Mammary epithelial cell (primary cell): ENCODE measurements at regions of chr2 and their contacts with region 1.

Region 1: DNA sequence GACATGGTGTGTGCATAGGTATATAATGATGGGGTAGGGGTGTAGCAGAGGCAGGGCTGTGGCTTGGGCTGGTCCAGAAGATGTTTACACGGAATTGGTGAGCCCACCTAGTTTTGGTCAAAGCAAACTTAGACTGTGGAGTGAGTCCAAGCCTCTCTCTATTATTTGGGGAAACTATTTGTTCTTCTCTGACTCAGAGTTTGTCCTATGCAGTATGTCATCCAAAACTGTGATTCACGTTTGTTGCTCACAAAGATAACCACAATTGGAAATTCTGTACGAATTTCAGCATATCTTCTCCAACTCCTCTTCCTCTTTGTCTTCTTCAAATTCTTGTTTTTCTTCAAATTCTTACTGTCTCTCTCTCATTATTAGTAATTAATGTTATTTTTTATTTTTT is 292.9 kb downstream of the XIRP2 start:
- DNase-seq: peak; percentile 74
- H3K4me3 ChIP-seq: no peak overlapping the region
- H3K27ac ChIP-seq: peak overlapping the region; percentile 34
- H3K4me1 ChIP-seq: peaks cover 16% of the 10 kb centered on the region
- H3K27me3 ChIP-seq: no peaks in the 10 kb centered on the region
- CTCF ChIP-seq: no peak

Region 2: DNA sequence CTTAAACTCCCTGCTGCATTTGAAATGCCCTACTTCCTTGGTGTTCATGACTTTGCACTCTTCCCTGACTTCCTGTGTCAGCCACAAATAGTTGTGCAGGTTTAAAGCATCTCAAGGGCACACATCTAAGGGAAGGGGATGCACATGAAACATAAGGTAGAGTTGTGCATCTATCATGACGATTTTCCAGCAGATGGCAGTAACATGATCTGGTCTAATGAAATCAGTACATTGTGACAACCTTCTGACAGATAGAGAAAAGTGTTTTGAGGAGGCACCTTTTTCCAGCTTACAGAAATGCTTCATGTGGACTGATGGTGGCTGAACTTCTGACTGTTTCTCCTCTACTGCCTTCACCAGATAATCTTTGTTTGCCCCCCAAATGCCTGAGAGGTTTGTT is 54.0 kb before region 1 on chr2:
- CTCF ChIA-PET with region 1: no interaction called
- dilution Hi-C with region 1: no loop called
- in situ Hi-C with region 1: no loop called
- intact Hi-C with region 1: loop called (anchors 2 kb)
- DNase-seq: peak; percentile 30
- H3K4me3 ChIP-seq: no peak overlapping the region
- H3K27ac ChIP-seq: no peak overlapping the region
- H3K4me1 ChIP-seq: no peaks in the 10 kb centered on the region
- H3K27me3 ChIP-seq: no peaks in the 10 kb centered on the region
- CTCF ChIP-seq: peak; percentile 36 to 49

Region 3: GRCh38 chr2:167147271-167147941 is 33.7 kb before region 1 on chr2:
- CTCF ChIA-PET with region 1: no interaction called
- dilution Hi-C with region 1: no loop called
- in situ Hi-C with region 1: no loop called
- intact Hi-C with region 1: loop called (anchors 5 kb)
- DNase-seq: no peak
- H3K4me3 ChIP-seq: no peak overlapping the region
- H3K27ac ChIP-seq: no peak overlapping the region
- H3K4me1 ChIP-seq: no peaks in the 10 kb centered on the region
- H3K27me3 ChIP-seq: no peaks in the 10 kb centered on the region
- CTCF ChIP-seq: no peak

Region 4: DNA sequence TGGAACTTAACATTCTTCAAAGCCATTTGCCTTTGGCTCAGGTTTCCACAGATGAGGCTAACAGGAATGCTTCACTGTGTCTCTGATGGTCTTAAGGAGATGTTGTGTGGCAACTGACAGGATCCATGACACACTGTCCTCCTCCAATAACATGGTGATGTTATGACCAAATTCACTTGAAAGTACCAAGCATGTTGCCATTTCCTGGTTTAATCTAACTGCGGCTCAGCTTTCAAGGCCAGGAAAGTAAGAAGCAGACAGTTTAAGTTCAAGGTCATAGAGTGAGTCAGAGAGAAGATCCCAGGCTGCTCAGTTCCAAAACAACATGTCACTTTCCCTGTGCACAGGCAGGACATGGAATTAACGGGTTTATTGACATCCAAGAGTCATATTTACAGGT is 552.6 kb after region 1 on chr2:
- CTCF ChIA-PET with region 1: no interaction called
- dilution Hi-C with region 1: no loop called
- in situ Hi-C with region 1: no loop called
- intact Hi-C with region 1: no loop called
- DNase-seq: no peak
- H3K4me3 ChIP-seq: no peak overlapping the region
- H3K27ac ChIP-seq: no peak overlapping the region
- H3K4me1 ChIP-seq: no peaks in the 10 kb centered on the region
- H3K27me3 ChIP-seq: peaks cover 3% of the 10 kb centered on the region
- CTCF ChIP-seq: no peak